Calu3 (cell line): ENCODE measurements at regions of chr6 and their contacts with region 1.

Region 1: DNA sequence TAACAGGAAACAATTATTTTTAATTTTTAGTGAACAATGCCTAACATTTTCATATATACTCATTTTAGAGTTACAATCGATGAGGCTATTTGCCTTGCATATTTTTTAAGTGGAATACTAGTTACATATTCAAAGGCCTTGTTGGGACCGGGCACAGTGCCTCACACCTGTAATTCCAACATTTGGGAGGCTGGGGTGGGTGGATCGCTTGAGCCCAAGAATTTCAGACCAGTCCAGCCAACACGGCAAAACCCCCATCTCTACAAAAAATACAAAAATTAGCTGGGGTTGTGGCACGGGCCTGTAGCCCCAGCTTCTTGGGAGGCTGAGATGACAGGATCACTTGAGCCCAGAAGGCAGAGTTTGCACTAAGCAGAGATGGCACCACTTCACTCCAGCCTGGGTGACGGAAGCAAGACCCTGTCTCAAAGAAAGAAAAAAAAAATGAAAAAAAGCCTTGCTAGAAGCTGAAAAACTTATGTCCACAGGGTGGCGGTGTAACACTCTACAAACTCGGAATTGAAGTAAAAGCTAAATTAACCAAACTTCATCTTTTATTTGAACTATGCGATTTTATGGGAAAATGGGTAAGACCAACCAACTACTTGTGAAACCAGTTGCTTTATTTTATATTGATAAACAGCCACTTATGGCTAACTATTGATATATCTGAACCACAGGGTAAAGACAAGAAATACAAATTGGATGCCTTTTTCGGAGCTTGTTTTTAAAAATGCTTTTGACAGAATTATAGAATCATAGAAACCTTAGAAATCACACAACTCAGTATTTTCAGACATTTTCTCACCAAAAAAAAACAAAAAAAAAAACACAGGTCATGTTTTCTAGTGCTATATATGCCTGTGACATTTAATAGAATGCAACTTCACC is 24.1 kb upstream of the ROS1 start:
- DNase-seq: peak; percentile 70
- H3K4me3 Mint-ChIP-seq: no peak overlapping the region
- H3K27ac Mint-ChIP-seq: peak overlapping the region; percentile 33
- H3K4me1 Mint-ChIP-seq: peaks cover 41% of the 10 kb centered on the region
- H3K27me3 Mint-ChIP-seq: no peaks in the 10 kb centered on the region
- CTCF ChIP-seq: peak; percentile 72

Region 2: GRCh38 chr6:117346142-117346930 is 103.5 kb before region 1 on chr6:
- CTCF ChIA-PET with region 1: interaction called, 3 read pairs
- intact Hi-C with region 1: loop called (anchors 2 kb)
- DNase-seq: no peak
- H3K4me3 Mint-ChIP-seq: no peak overlapping the region
- H3K27ac Mint-ChIP-seq: peak overlapping the region; percentile 8
- H3K4me1 Mint-ChIP-seq: no peaks in the 10 kb centered on the region
- H3K27me3 Mint-ChIP-seq: peaks cover 12% of the 10 kb centered on the region
- CTCF ChIP-seq: peak; percentile 56

Region 3: GRCh38 chr6:117399924-117400323 is 49.9 kb before region 1 on chr6:
- CTCF ChIA-PET with region 1: interaction called, 13 read pairs
- intact Hi-C with region 1: loop called (anchors 1 kb)
- DNase-seq: no peak
- H3K4me3 Mint-ChIP-seq: no peak overlapping the region
- H3K27ac Mint-ChIP-seq: no peak overlapping the region
- H3K4me1 Mint-ChIP-seq: no peaks in the 10 kb centered on the region
- H3K27me3 Mint-ChIP-seq: no peaks in the 10 kb centered on the region
- CTCF ChIP-seq: no peak

Region 4: GRCh38 chr6:117482240-117483003 is 32.6 kb after region 1 on chr6 and contains the start of gene DCBLD1:
- CTCF ChIA-PET with region 1: interaction called, 8 read pairs
- intact Hi-C with region 1: loop called (anchors 5 kb)
- DNase-seq: peak; percentile 85
- H3K4me3 Mint-ChIP-seq: peak within 1 kb of the TSS; percentile 91
- H3K27ac Mint-ChIP-seq: peak within 1 kb of the TSS; percentile 84
- H3K4me1 Mint-ChIP-seq: peaks cover 39% of the 10 kb centered on the region
- H3K27me3 Mint-ChIP-seq: no peaks in the 10 kb centered on the region
- CTCF ChIP-seq: no peak
- total RNA-seq, gene DCBLD1: 22.3 and 28.2 TPM in 2 replicates

Region 5: GRCh38 chr6:117602151-117602898 is 152.5 kb after region 1 on chr6 and contains the start of gene GOPC:
- CTCF ChIA-PET with region 1: interaction called, 6 read pairs
- intact Hi-C with region 1: loop called (anchors 2 kb)
- DNase-seq: peak; percentile 95
- H3K4me3 Mint-ChIP-seq: peak within 1 kb of the TSS; percentile 99
- H3K27ac Mint-ChIP-seq: peak within 1 kb of the TSS; percentile 98
- H3K4me1 Mint-ChIP-seq: peaks cover 19% of the 10 kb centered on the region
- H3K27me3 Mint-ChIP-seq: no peaks in the 10 kb centered on the region
- CTCF ChIP-seq: peak; percentile 30
- total RNA-seq, gene GOPC: 28.8 and 33.5 TPM in 2 replicates